Left cardiac atrium (tissue), 4 donors: ENCODE measurements at regions of chr3 and their contacts with region 1.

Region 1: GRCh38 chr3:122101646-122102045 is 46.5 kb downstream of the CD86 start:
- DNase-seq: no peak
- ATAC-seq: no peak

Region 2: DNA sequence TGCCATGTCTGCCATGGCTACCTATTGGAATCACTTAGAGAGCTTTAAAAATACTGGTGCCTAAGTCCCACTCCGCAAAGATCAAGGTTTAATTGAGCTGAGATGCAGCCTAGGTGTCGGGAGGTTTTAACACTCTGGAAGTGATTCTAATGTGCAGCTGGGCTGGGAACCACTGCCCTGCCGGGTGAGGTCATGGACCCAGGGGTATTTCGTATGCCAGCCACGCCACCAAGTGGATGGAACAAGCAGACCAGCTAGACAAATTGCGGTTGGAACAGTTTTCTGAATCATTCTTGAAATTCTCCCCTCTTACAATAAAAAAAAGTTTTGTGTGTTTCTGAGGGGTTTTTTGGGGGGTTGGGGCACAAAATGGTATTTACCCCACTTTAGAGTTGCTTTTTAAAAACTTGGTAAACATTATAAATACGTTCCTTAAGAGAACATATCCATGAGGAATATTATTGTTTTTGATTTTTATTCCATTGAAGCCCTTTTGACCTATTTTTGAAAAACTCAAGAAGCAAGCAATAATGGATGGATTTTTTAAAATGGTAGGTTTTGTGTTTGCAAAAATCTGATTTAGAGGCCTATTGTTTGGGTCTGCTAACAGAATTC is 157.2 kb after region 1 on chr3:
- intact Hi-C with region 1: loop called in 1 of 2 experiments (anchors 10 kb)
- DNase-seq: peak; percentile 76
- ATAC-seq: peak; percentile 94 to 95